Psoas muscle (tissue), 8 donors: ENCODE measurements at regions of chr5 and their contacts with region 1.

Region 1: DNA sequence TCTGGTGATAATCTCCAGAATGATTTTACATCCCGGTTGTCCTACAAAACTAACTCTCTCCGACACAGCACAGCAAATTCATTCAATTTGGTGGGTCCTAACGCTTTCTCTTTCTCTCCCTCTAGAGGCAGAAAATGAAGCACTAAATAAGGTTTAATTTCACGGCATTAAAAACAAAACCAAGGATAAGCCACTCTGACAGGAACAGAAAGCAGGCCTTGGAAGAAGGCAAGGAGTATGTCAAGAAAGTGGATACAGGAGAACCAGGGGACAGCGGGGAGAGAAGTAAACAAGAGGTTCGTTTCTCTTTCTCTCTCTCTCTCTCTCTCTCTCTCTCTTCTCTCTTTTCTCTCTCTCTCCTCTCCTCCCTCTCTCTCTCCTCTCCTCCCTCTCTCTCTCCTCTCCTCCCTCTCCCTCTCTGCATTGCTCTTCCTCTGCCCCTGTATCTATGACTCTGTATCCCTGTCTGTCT is 49.8 kb downstream of the EBF1 start:
- DNase-seq: no peak
- ATAC-seq: peak in 2 of 4 donors; percentile 46 to 55
- H3K4me3 ChIP-seq: peak overlapping the region; percentile 56
- H3K27ac ChIP-seq: peak overlapping the region; percentile 79
- H3K4me1 ChIP-seq: peaks cover 7% of the 10 kb centered on the region
- H3K27me3 ChIP-seq: peaks cover 0 to 59% (median 4%) of the 10 kb centered on the region in 3 donors
- CTCF ChIP-seq: peak; percentile 29

Region 2: DNA sequence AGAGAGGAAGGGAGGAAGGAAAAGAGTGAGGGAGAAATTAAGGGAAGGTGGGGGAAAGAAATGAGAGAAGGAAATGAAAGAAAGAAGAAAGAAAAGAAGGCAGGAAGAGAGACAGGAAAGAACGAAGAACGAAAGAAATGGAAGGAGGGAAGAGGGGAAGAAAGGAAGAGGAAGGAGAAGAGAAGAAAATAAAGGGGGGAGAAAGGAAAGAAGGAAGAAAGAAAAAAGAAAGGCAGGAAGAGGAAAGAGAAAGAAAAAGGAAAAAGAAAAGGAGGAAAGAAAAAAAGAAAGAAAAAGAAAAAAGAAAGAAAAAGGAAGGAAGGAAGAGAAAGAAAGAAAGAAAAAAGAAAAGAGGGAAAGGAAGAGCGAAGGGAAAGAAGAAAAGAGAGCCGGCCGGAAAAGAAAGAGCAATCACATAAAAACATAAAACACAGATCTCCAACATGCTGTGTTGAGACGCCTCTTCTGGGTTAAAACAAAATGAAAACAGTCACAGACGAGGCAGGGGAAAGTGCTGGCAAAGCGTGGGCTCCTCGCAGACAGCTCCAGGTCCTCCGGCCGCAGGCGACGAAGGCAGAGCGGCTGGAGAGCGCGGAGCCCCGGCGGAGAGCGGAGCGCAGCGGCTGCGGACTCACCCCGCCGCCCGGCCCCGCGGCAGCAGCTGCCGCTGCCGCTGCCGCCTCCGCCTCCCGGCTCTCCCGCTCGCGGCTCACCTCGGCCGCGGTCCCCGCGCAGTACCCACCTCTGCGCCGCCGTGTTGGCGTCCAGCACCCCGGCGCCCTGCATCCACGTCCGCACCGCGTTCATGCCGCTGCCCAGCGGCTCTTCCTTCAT is 48.9 kb after region 1 on chr5:
- intact Hi-C with region 1: loop called in 1 of 2 experiments (anchors 5 kb)
- DNase-seq: peak; percentile 42 to 51
- ATAC-seq: peak in 3 of 4 donors; percentile 17 to 25 (median 23)
- H3K4me3 ChIP-seq: peak overlapping the region; percentile 71
- H3K27ac ChIP-seq: peak overlapping the region; percentile 74
- H3K4me1 ChIP-seq: no peaks in the 10 kb centered on the region
- H3K27me3 ChIP-seq: peaks cover 4 to 72% (median 27%) of the 10 kb centered on the region in 3 donors
- CTCF ChIP-seq: no peak